CD4-positive, alpha-beta T cell (primary cell): ENCODE measurements at regions of chrX and their contacts with region 1.

Region 1: DNA sequence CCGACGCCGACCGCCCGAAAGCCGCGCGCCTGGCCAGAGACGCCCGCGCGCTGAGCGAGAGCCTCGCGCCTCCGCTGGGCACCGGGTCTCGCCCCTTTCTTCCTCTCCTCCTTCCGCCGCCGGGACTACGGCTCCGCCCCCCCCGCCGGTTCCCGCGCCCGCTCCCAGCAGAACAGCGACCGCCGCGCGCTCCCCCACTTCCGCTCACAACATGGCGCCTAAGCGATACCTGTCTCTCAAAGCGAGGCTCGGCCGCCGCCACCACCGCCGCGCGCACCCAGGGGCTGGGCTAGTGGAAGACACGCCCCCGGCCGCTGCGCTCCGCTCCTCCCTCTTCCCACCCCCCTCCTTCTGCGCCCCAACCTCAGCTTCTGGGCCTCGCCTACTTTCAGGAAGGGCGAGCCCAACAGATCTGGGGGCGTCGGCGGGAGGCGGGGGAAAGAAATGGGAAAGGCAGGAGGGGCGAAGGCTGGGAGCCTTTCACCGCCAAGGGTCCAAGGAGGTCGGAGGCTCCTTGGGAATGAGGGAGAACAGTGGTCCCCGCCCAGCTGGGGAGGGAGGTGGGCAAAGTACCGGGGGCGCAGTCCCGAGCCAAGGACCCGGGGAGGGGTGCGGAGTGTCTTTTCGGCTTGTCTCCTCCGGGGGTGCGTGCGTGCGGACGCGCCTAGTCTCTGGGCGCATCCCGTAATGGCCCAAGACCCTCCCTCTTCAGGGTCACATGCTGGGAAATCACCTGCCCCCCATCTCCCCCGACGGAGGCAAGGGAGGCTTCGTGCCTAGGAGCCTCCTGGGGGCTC is at the start of gene RPS6KA3:
- DNase-seq: peak; percentile 79 to 95 (median 89)
- ATAC-seq: peak; percentile 81
- H3K4me3 ChIP-seq: peak within 1 kb of the TSS; percentile 86
- H3K4me3 Mint-ChIP-seq: peak within 1 kb of the TSS; percentile 99
- H3K27ac ChIP-seq: peak within 1 kb of the TSS; percentile 75 to 76
- H3K27ac Mint-ChIP-seq: peak within 1 kb of the TSS; percentile 97
- H3K4me1 ChIP-seq: peaks cover 15% of the 10 kb centered on the region
- H3K4me1 Mint-ChIP-seq: peaks cover 29% of the 10 kb centered on the region
- H3K27me3 ChIP-seq: no peaks in the 10 kb centered on the region
- H3K27me3 Mint-ChIP-seq: no peaks in the 10 kb centered on the region
- CTCF ChIP-seq: no peak
- total RNA-seq, gene RPS6KA3: 39.6 to 39.7 TPM

Region 2: DNA sequence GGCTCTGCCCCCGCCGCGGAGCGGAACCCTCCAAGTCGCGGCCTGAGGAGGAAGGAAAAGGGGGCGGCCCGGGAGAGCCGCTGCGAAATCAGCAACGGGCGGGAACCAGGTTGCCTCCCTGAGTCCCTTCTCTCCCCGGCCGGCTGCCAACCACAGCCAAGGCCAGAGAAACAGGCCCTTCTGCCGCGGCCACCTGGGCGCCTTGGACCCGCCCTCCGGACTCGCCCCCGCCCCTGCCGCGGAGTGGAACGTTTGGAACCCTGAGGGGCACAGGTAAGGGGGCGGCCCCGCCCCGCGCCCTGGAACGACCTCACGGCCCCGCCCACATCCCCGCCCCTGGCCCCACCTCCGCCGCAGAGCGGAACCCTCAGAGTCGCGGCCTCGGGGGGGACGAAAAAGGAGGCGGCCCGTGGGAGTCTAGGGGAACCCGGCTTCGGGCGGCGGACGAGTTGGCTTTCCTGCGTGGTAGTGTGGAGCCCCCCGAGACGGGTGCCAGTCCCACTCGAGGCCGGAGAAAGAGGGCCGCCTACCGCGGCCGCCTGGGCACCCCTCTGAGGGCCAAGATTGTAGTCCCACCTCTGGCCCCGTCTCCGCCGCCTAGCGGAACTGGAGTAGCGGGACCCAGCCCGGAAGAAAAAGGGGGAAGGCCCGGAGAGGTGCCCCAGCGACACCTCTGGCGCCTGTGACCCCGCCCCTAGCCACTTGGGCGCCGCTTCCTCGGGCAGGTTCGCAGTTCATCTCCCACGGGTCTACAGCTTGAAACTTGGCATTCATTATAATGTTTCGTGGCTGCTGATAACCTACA is 1282.4 kb before region 1 on chrX:
- CTCF ChIA-PET with region 1: no interaction called
- POLR2A ChIA-PET with region 1: no interaction called
- intact Hi-C with region 1: loop called in 1 of 2 experiments (anchors 10 kb)
- DNase-seq: peak; percentile 78 to 92 (median 84)
- ATAC-seq: peak; percentile 85
- H3K4me3 ChIP-seq: peak overlapping the region; percentile 78
- H3K4me3 Mint-ChIP-seq: peak overlapping the region; percentile 92
- H3K27ac ChIP-seq: peak overlapping the region; percentile 83 to 94
- H3K27ac Mint-ChIP-seq: peak overlapping the region; percentile 91
- H3K4me1 ChIP-seq: peaks cover 19% of the 10 kb centered on the region
- H3K4me1 Mint-ChIP-seq: peaks cover 21% of the 10 kb centered on the region
- H3K27me3 ChIP-seq: no peaks in the 10 kb centered on the region
- H3K27me3 Mint-ChIP-seq: no peaks in the 10 kb centered on the region
- CTCF ChIP-seq: peak; percentile 26

Region 3: DNA sequence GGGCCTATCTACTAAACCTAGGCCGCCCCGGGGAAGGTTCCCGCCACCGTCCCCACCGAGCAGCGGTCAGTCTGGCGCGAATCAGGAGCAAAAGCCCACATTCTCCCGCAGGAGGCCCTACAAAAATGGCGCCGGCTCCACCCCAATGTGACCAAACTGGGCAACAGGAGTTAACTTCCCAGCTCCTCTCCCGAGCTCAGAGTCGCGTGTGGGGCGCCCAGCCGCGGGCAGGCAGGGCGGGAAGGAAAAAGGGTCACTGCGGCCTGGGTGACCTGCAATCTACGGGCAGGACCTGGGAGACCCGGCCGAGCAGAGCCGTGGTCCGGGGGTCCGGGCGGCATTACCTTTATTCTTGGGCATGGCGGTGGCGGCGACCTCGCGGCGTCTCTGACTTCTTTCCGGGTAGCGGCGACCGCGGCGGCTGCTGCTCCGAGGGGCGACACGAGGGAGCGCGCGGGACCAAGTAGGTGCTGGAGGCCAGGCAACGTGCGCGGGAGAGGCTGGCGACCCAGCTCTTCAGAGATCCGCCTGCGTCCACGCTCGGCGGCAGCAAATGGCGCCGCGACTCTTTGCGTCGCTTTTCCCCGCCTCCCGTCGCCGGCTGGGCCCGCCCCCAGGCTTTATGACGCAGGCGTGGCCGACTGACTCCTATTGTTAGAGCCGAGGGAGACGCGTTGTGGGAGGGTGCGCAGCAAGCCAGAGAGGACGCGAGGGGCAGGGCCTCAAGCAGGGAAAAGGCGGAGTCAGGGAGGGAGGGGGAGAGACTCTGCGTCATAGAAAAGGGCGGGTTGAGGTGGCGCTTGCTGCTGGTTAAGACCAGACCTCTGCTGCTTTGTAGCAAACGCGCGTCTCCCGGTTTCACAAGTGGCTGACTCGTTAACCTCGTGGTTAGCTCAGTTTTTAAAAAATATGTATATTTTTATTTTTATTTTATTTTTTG is 125.5 kb before region 1 on chrX and contains the start of gene EIF1AX:
- CTCF ChIA-PET with region 1: no interaction called
- POLR2A ChIA-PET with region 1: interaction called, 5 read pairs
- intact Hi-C with region 1: loop called in 1 of 2 experiments (anchors 2 kb)
- DNase-seq: peak; percentile 89 to 99 (median 96)
- ATAC-seq: peak; percentile 98
- H3K4me3 ChIP-seq: peak within 1 kb of the TSS; percentile 92
- H3K4me3 Mint-ChIP-seq: peak within 1 kb of the TSS; percentile 85
- H3K27ac ChIP-seq: peak within 1 kb of the TSS; percentile 64 to 75
- H3K27ac Mint-ChIP-seq: peak within 1 kb of the TSS; percentile 88
- H3K4me1 ChIP-seq: peaks cover 13% of the 10 kb centered on the region
- H3K4me1 Mint-ChIP-seq: peaks cover 33% of the 10 kb centered on the region
- H3K27me3 ChIP-seq: no peaks in the 10 kb centered on the region
- H3K27me3 Mint-ChIP-seq: no peaks in the 10 kb centered on the region
- CTCF ChIP-seq: no peak
- total RNA-seq, gene EIF1AX: 56.1 to 62.5 TPM

Region 4: GRCh38 chrX:20309806-20310205 is 42.8 kb after region 1 on chrX:
- CTCF ChIA-PET with region 1: no interaction called
- POLR2A ChIA-PET with region 1: no interaction called
- intact Hi-C with region 1: loop called in 1 of 2 experiments (anchors 5 kb)
- DNase-seq: no peak
- ATAC-seq: no peak
- H3K4me3 ChIP-seq: no peak overlapping the region
- H3K4me3 Mint-ChIP-seq: no peak overlapping the region
- H3K27ac ChIP-seq: no peak overlapping the region
- H3K27ac Mint-ChIP-seq: no peak overlapping the region
- H3K4me1 ChIP-seq: no peaks in the 10 kb centered on the region
- H3K4me1 Mint-ChIP-seq: peaks cover 9% of the 10 kb centered on the region
- H3K27me3 ChIP-seq: no peaks in the 10 kb centered on the region
- H3K27me3 Mint-ChIP-seq: no peaks in the 10 kb centered on the region
- CTCF ChIP-seq: no peak

Region 5: DNA sequence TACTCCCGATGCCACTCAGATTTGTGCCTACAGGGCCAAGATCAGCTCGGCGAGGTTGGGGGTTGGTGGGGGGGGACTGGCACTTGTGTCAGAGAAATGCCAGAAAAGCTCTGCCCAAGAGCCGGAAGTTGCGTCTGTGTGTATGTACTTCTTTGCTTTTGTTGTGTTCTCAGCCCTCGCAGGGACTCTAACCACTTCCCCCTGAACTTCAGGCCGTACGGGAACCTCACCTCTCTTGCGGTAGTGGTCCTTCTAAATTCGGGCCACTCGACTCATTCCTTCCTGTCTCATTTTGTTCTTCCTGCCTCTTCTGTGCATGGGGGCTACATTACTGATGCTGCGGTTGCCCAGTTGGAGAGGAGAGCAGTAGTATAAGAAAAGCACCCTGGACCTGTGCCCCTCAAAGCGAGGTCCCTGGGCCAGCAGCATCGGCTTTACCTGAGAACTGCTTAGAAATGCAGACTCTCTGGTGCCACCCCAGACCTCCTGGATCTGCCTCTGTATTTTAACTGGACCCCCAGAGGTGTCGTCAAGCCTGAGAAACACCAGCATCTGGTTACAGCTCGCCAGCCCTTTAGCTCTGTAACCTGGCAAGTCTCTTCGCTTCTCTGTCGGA is 146.0 kb after region 1 on chrX:
- CTCF ChIA-PET with region 1: no interaction called
- POLR2A ChIA-PET with region 1: interaction called, 4 read pairs
- intact Hi-C with region 1: loop called in 1 of 2 experiments (anchors 10 kb)
- DNase-seq: peak; percentile 26 to 87 (median 50)
- ATAC-seq: peak; percentile 83
- H3K4me3 ChIP-seq: peak overlapping the region; percentile 12
- H3K4me3 Mint-ChIP-seq: peak overlapping the region; percentile 53
- H3K27ac ChIP-seq: peak overlapping the region; percentile 41 to 58
- H3K27ac Mint-ChIP-seq: peak overlapping the region; percentile 89
- H3K4me1 ChIP-seq: peaks cover 37% of the 10 kb centered on the region
- H3K4me1 Mint-ChIP-seq: peaks cover 46% of the 10 kb centered on the region
- H3K27me3 ChIP-seq: no peaks in the 10 kb centered on the region
- H3K27me3 Mint-ChIP-seq: no peaks in the 10 kb centered on the region
- CTCF ChIP-seq: no peak